Activated CD4-positive, alpha-beta T cell treated with anti-CD3 and anti-CD28 coated beads for 36 hours (primary cell): ENCODE measurements at regions of chr6 and their contacts with region 1.

Region 1: GRCh38 chr6:169589293-169589692 is 112.5 kb downstream of the WDR27 start:
- DNase-seq: peak; percentile 51
- ATAC-seq: peak; percentile 65
- H3K4me3 Mint-ChIP-seq: no peak overlapping the region
- H3K27ac Mint-ChIP-seq: no peak overlapping the region
- H3K4me1 Mint-ChIP-seq: peaks cover 29% of the 10 kb centered on the region
- H3K27me3 Mint-ChIP-seq: no peaks in the 10 kb centered on the region

Region 2: DNA sequence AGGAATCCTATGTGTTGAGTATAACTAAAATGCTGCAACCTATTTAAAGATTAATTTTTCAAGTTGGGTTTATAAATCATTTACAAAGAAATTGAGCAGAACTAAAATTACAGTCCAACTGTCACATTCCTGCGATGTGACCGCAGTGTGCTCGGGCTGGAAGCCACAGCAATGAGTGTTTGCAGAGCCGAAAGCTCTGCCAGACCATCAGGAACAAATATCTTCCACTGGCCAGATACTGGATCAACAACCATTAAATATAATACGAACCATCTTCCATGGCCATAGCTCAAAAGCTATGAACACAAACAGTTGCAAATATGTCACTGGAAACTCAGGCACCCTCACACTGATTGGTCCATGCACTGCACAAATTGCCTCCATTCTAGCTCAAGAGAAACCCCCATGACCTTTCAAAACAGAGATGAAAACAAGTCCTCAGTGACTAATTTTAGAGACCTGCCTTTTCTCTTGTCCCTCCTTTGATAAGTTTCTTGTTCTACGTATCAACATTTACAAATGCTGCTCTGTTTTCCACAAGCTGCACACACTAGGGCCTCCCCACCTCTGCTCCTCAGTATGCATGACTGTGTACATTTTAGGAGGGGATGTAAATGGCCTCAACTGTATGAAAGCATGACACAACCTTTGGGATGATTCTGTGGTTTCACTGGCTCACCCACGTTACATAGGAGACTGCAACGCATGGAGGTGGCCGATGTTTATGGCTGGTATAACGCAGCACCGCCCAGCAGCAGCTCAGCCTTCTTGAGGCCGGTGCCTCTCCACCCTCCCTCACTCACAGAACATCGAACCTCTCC is 59.2 kb before region 1 on chr6:
- CTCF ChIA-PET with region 1: no interaction called
- POLR2A ChIA-PET with region 1: no interaction called
- intact Hi-C with region 1: loop called in 1 of 2 experiments (anchors 2 kb)
- DNase-seq: peak; percentile 66
- ATAC-seq: peak; percentile 92
- H3K4me3 Mint-ChIP-seq: no peak overlapping the region
- H3K27ac Mint-ChIP-seq: peak overlapping the region; percentile 61
- H3K4me1 Mint-ChIP-seq: peaks cover 16% of the 10 kb centered on the region
- H3K27me3 Mint-ChIP-seq: no peaks in the 10 kb centered on the region

Region 3: GRCh38 chr6:169556758-169557548 is 32.3 kb before region 1 on chr6:
- CTCF ChIA-PET with region 1: no interaction called
- POLR2A ChIA-PET with region 1: no interaction called
- intact Hi-C with region 1: loop called (anchors 2 kb)
- DNase-seq: peak; percentile 72
- ATAC-seq: peak; percentile 100
- H3K4me3 Mint-ChIP-seq: peak overlapping the region; percentile 7
- H3K27ac Mint-ChIP-seq: no peak overlapping the region
- H3K4me1 Mint-ChIP-seq: peaks cover 13% of the 10 kb centered on the region
- H3K27me3 Mint-ChIP-seq: peaks cover 30% of the 10 kb centered on the region